Vagina (tissue), 2 donors: ENCODE measurements at regions of chr15 and their contacts with region 1.

Region 1: GRCh38 chr15:68503791-68504680 is 72.1 kb upstream of the ITGA11 start:
- DNase-seq: peak in 1 of 2 donors; percentile 94
- H3K4me3 ChIP-seq: no peak overlapping the region
- H3K27ac ChIP-seq: no peak overlapping the region
- H3K4me1 ChIP-seq: peaks cover 8% of the 10 kb centered on the region
- H3K27me3 ChIP-seq: no peaks in the 10 kb centered on the region
- CTCF ChIP-seq: no peak
- POLR2A ChIP-seq: no peak

Region 2: GRCh38 chr15:67232591-67232990 is 1271.4 kb before region 1 on chr15:
- intact Hi-C with region 1: loop called (anchors 10 kb)
- DNase-seq: no peak
- H3K4me3 ChIP-seq: no peak overlapping the region
- H3K27ac ChIP-seq: no peak overlapping the region
- H3K4me1 ChIP-seq: no peaks in the 10 kb centered on the region
- H3K27me3 ChIP-seq: no peaks in the 10 kb centered on the region
- CTCF ChIP-seq: no peak
- POLR2A ChIP-seq: no peak

Region 3: DNA sequence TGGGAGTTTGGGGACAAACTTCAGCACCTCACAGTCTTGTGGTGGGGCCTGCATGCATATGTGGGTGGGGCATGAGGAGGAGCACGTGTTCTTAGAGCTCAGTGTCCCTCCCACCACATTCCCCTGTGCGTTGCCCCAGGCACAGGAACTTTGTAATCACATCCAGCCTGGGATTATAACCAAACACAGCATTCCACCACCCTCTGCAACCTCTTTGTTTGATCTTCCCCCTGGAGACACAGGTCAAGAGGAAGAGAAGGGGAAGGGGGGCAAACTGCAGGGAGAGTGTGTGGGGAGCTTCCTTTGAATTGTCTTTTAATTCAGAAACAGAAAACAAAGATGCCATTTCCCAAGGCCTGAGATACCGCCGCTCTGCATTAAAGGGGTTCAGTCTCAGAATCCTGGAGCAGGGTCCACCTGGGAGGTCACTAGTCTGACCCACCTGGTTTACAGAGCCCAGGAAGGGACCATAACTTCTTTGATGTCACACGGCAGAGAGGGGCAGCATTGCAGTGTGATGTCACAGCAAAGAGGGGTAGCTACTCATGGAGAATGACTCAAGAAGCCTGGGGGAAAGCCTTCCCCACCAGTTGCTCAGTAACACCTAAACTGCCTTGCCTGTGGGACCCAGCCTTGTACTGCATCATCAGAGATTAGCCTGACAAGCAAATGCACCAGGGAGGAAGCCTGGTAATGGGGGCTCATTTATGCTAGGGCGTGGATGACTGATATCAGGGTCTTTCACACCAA is 557.9 kb before region 1 on chr15:
- intact Hi-C with region 1: no loop called
- DNase-seq: no peak
- H3K4me3 ChIP-seq: no peak overlapping the region
- H3K27ac ChIP-seq: peak overlapping the region; percentile 43
- H3K4me1 ChIP-seq: peaks cover 31% of the 10 kb centered on the region
- H3K27me3 ChIP-seq: no peaks in the 10 kb centered on the region
- CTCF ChIP-seq: no peak
- POLR2A ChIP-seq: no peak

Region 4: DNA sequence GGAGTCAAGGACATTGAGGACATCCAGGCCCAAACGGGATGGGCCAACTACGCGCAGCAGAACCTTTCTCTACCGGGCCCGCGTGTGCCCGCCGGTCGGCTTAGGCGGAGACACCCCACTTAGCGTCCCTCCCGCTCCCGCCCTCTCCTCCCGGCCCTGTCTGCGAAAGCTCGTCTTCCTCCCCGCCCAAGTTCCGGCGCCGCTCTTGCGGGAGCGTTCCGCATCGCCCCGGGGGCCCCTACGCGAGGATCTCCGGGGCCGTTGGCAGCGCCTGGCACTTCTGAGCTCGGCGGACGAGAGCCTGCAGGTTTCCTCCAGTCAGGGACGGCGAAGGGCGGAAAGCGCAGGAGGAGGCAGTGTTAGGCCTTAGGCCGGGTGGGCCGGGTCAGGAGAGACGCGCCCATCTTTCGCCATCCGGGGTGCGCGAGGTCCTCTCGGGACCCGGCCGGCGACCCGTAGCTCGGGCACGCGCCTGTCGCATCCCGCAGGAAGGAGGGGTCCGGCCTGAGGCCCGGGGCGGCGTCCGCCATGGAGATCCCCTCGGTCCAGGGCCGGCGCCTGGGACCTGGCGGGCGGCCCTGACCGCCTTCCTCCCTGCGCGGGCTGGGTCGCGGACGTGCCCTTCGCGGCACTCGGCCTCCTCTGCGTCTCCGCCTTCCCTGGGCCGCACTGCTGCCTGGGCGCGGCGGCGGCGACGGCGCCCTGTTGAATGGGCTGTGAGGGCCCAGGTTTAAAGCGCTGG is 226.3 kb before region 1 on chr15 and contains the start of gene FEM1B:
- intact Hi-C with region 1: no loop called
- DNase-seq: peak in 1 of 2 donors; percentile 96
- H3K4me3 ChIP-seq: peak within 1 kb of the TSS; percentile 82 to 91
- H3K27ac ChIP-seq: peak within 1 kb of the TSS; percentile 99
- H3K4me1 ChIP-seq: peaks cover 57% of the 10 kb centered on the region
- H3K27me3 ChIP-seq: no peaks in the 10 kb centered on the region
- CTCF ChIP-seq: peak in 1 of 3 experiments; percentile 21
- POLR2A ChIP-seq: peak in 1 of 2 donors; percentile 43
- total RNA-seq, gene FEM1B: 38.3 TPM